Motor neuron (in vitro differentiated cells): ENCODE measurements at regions of chr9 and their contacts with region 1.

Region 1: GRCh38 chr9:115013998-115014397 is 83.6 kb upstream of the TNFSF8 start:
- ATAC-seq: peak; percentile 47 to 85 (median 66)
- H3K4me3 ChIP-seq: no peak overlapping the region
- H3K27ac ChIP-seq: no peak overlapping the region
- H3K4me1 ChIP-seq: peaks cover 0 to 14% of the 10 kb centered on the region in 2 donors

Region 2: GRCh38 chr9:114405294-114406034 is 608.5 kb before region 1 on chr9:
- in situ Hi-C with region 1: loop called in 2 of 9 experiments (anchors 10 to 25 kb)
- ATAC-seq: peak; percentile 85 to 97 (median 92)
- H3K4me3 ChIP-seq: no peak overlapping the region
- H3K27ac ChIP-seq: no peak overlapping the region
- H3K4me1 ChIP-seq: peaks cover 0 to 13% of the 10 kb centered on the region in 2 donors

Region 3: GRCh38 chr9:114653556-114654159 is 360.3 kb before region 1 on chr9:
- in situ Hi-C with region 1: loop called in 4 of 9 experiments (anchors 25 kb)
- ATAC-seq: peak; percentile 59 to 86 (median 67)
- H3K4me3 ChIP-seq: no peak overlapping the region
- H3K27ac ChIP-seq: no peak overlapping the region
- H3K4me1 ChIP-seq: no peaks in the 10 kb centered on the region

Region 4: DNA sequence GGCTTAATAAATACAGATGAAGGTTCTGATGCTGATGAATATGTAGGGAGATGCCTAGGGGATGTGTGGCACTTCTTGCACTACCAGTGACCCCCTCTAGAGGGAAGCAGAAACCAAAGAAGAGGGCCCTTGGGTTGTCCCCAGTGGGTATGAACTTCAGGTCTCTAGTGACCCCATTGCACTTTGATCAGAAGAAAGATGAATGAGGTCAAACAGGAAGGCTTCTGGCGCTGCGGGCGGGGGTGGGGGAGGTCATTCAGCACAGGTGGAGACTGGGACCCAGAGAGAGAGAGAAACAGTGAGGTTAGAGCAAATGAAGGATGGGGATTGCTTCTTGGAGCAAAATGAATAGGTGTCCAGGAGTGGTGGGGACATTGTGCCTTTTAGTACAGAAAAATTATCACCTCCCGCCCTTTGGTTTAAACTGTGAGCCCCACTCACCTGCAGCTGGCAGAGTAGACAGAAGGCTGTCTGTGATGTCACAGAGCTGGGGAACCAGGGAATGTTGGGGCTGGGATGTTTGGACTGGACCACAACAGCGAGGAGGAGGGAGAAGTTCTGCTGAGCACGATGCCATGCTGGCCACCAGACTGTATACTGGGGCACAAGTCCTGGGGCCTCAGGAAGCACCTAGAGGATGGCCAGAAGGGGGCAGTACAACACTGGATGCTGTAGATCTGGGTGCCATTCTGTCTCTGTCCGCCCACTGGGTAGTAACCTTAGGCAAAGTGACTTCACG is 332.2 kb before region 1 on chr9 and contains the start of gene TEX48:
- in situ Hi-C with region 1: loop called in 2 of 9 experiments (anchors 10 to 25 kb)
- ATAC-seq: peak in 7 of 8 experiments; percentile 33 to 92 (median 53)
- H3K4me3 ChIP-seq: no peak within 1 kb of the TSS
- H3K27ac ChIP-seq: no peak within 1 kb of the TSS
- H3K4me1 ChIP-seq: peaks cover 15 to 18% of the 10 kb centered on the region in 2 donors
- total RNA-seq, gene TEX48: not detected

Region 5: GRCh38 chr9:114906908-114907571 is 107.0 kb before region 1 on chr9:
- in situ Hi-C with region 1: loop called in 2 of 9 experiments (anchors 10 to 25 kb)
- ATAC-seq: peak in 7 of 8 experiments; percentile 30 to 71 (median 51)
- H3K4me3 ChIP-seq: no peak overlapping the region
- H3K27ac ChIP-seq: no peak overlapping the region
- H3K4me1 ChIP-seq: peaks cover 7 to 8% of the 10 kb centered on the region in 2 donors

Region 6: GRCh38 chr9:115157245-115157674 is 143.3 kb after region 1 on chr9:
- in situ Hi-C with region 1: no loop called
- ATAC-seq: peak in 3 of 8 experiments; percentile 22 to 55 (median 53)
- H3K4me3 ChIP-seq: no peak overlapping the region
- H3K27ac ChIP-seq: no peak overlapping the region
- H3K4me1 ChIP-seq: no peaks in the 10 kb centered on the region

Region 7: GRCh38 chr9:115192835-115193525 is 179.0 kb after region 1 on chr9:
- in situ Hi-C with region 1: no loop called
- ATAC-seq: no peak
- H3K4me3 ChIP-seq: no peak overlapping the region
- H3K27ac ChIP-seq: no peak overlapping the region
- H3K4me1 ChIP-seq: peaks cover 2 to 3% of the 10 kb centered on the region in 2 donors